ENCODE measurements at regions of chr13 and their contacts with region 1.

Region 1: GRCh38 chr13:96958286-96958891 is 35.9 kb downstream of the OXGR1 start:
- DNase-seq: no peak
- ATAC-seq: peak; percentile 67
- H3K4me3 ChIP-seq: no peak overlapping the region
- H3K27ac ChIP-seq: no peak overlapping the region
- H3K4me1 ChIP-seq: no peaks in the 10 kb centered on the region
- H3K27me3 ChIP-seq: peaks cover 3% of the 10 kb centered on the region; the same call in 1 of the 2 replicates
- CTCF ChIP-seq: peak; percentile 37 to 87 (median 76); a peak in 5 of 6 replicates
- POLR2A ChIP-seq: no peak
- RAD21 ChIP-seq: peak; percentile 24; the same call in 1 of the 2 replicates

Region 2: GRCh38 chr13:96020155-96020575 is 938.2 kb before region 1 on chr13:
- CTCF ChIA-PET with region 1: interaction called, 16 read pairs
- POLR2A ChIA-PET with region 1: no interaction called
- RAD21 ChIA-PET with region 1: no interaction called
- intact Hi-C with region 1: no loop called
- DNase-seq: peak; percentile 56
- ATAC-seq: peak; percentile 95
- H3K4me3 ChIP-seq: no peak overlapping the region
- H3K27ac ChIP-seq: no peak overlapping the region
- H3K4me1 ChIP-seq: no peaks in the 10 kb centered on the region
- H3K27me3 ChIP-seq: no peaks in the 10 kb centered on the region
- CTCF ChIP-seq: peak; percentile 57 to 70 (median 58); a peak in 5 of 6 replicates
- POLR2A ChIP-seq: no peak
- RAD21 ChIP-seq: peak; percentile 78

Region 3: DNA sequence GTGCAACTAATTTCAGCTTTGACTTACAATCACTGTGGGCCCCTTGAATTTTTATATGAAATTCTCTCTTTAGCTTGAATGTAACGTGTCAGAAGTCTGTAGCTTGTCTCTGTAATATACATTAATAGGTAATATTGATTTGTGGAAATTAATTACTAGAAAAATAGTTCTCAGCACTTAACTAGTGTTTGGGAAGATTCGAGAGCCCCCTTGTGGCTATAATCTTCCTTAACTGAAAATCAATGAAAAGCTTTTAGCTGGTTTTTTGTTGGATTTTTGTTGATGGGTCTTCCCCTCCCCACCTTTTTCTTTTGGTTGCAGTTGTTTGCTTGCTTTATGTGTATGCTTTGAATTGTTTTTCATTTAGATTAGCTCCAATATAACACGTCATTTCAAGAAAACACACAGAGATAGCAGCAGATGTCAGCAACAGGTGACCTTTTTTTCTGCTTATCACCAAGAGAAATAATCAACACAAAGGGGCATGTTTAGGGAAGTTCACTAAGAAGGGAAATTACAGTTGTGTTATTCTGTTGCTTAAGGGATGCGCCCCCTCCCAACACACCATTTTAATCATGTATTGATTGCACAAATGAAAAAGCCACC is 140.9 kb before region 1 on chr13:
- CTCF ChIA-PET with region 1: interaction called, 22 read pairs
- POLR2A ChIA-PET with region 1: no interaction called
- RAD21 ChIA-PET with region 1: interaction called in 1 of 2 experiments, 3 read pairs
- intact Hi-C with region 1: loop called (anchors 2 kb)
- DNase-seq: peak; percentile 37
- ATAC-seq: no peak
- H3K4me3 ChIP-seq: no peak overlapping the region
- H3K27ac ChIP-seq: no peak overlapping the region
- H3K4me1 ChIP-seq: no peaks in the 10 kb centered on the region
- H3K27me3 ChIP-seq: no peaks in the 10 kb centered on the region
- CTCF ChIP-seq: peak; percentile 42 to 58 (median 48); a peak in 4 of 6 replicates
- POLR2A ChIP-seq: no peak
- RAD21 ChIP-seq: peak; percentile 61

Region 4: GRCh38 chr13:96822895-96823294 is 135.5 kb before region 1 on chr13:
- CTCF ChIA-PET with region 1: interaction called, 22 read pairs
- POLR2A ChIA-PET with region 1: no interaction called
- RAD21 ChIA-PET with region 1: interaction called in 1 of 2 experiments, 3 read pairs
- intact Hi-C with region 1: loop called (anchors 2 kb)
- DNase-seq: peak; percentile 54
- ATAC-seq: peak; percentile 100
- H3K4me3 ChIP-seq: no peak overlapping the region
- H3K27ac ChIP-seq: no peak overlapping the region
- H3K4me1 ChIP-seq: no peaks in the 10 kb centered on the region
- H3K27me3 ChIP-seq: peaks cover 6% of the 10 kb centered on the region; the same call in 1 of the 2 replicates
- CTCF ChIP-seq: peak; percentile 42 to 66 (median 64); a peak in 5 of 6 replicates
- POLR2A ChIP-seq: no peak
- RAD21 ChIP-seq: peak; percentile 54

Region 5: DNA sequence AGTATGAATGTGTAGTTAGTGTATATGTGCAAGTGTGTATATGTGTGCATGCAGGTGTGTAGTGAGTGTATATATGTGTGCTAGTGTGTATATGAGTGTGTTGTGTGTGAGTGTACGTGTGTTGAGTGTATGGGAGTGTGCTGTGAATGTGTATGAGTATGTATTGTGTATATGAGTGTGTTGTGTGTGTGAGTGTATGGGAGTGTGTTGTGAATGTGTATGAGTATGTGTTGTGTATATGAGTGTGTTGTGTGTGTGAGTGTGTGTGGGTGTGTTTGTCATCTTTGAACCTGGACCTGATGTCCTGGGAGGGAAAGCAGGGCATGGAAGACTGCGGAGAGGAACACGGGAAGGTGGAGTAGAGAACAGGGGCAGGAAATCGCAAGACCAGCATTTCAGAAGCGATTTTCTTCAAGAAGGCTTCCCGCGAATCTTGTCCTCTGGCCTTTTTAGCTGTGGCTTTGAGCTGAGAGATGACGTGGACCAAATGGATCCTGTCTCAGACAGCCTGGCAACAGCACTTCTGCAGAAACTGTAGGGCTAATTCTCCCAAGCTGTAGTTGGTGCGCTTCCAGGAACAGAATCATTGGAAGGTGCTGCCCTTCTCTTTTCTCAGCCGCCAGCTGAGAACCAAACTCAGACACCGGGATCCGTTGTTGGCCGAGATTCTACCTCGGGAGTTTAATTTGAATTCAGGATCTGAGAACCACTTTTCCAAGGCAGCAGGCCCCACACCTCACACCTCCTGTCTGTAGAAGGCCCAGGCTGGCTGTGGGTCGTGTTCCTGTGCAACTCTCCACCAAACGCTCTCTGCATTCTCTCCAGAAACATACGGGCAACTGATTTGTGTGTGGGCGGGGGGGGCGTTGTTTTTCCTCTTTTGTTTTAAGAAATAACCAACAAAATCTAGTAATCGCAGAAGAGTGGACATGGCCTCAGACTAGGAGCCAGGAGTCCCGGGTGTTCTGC is 380.9 kb after region 1 on chr13:
- CTCF ChIA-PET with region 1: no interaction called
- POLR2A ChIA-PET with region 1: no interaction called
- RAD21 ChIA-PET with region 1: no interaction called
- intact Hi-C with region 1: no loop called
- DNase-seq: no peak
- ATAC-seq: no peak
- H3K4me3 ChIP-seq: no peak overlapping the region
- H3K27ac ChIP-seq: peak overlapping the region; percentile 27
- H3K4me1 ChIP-seq: peaks cover 25 to 34% of the 10 kb centered on the region in 2 experiments
- H3K27me3 ChIP-seq: no peaks in the 10 kb centered on the region
- CTCF ChIP-seq: no peak
- POLR2A ChIP-seq: no peak
- RAD21 ChIP-seq: no peak

Measured in HCT116 (cell line).